Posterior cingulate gyrus (tissue), 11 donors: ENCODE measurements at regions of chr9 and their contacts with region 1.

Region 1: DNA sequence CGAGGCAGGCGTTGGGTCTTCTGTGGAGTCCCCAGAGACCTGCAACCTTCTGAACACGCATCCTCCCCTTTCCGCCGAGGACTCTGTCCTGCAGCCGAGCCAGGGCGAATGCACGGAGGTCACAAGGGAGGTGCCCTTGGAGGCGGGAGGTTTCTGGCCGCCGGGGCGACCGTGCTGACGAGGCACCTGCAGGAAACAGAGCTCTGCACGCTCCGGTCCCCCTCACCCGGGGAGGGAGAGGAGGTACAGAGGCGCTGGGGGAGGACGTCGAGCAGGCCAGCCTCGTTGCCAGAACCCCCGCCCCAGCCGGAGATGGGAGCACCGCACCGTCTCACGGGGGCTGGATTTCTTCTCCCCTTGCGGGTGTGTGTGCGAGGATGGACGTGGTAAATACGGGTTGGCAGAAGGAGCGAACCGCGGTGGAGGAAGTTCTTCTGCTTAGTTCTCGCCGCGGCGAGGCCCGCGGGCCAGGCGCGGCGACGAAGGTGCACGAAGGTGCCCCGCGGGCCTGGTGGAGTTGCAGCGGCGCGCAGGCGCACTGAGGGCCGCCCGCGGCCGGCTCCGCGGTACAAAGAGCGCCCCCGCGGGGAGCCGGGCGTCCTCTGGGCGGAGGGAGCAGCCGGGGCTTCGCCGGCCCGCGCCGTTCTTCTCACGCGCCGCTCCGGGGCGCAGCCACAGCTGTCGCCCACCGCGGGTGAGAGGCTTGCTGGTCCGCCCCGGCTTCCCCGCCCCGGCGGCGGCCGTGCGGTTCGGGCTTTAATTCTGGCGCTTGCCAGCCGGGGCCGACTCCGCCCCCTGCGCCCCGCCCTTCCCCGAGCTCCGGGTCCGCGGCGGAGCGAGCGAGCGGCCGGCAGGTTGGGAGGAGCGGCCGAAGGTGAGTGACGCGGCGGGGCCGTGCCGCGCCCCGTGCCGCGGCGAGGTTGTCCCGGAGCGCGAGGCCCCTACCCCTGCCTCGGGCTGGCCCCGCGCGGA is 289.5 kb downstream of the DOCK8 start:
- DNase-seq: peak; percentile 46 to 95 (median 62)

Region 2: GRCh38 chr9:406886-407654 is 97.1 kb before region 1 on chr9:
- intact Hi-C with region 1: loop called (anchors 10 kb)
- DNase-seq: no peak

Region 3: GRCh38 chr9:469672-470551 is 34.3 kb before region 1 on chr9:
- intact Hi-C with region 1: loop called (anchors 5 kb)
- DNase-seq: peak; percentile 47 to 96 (median 84)

Region 4: DNA sequence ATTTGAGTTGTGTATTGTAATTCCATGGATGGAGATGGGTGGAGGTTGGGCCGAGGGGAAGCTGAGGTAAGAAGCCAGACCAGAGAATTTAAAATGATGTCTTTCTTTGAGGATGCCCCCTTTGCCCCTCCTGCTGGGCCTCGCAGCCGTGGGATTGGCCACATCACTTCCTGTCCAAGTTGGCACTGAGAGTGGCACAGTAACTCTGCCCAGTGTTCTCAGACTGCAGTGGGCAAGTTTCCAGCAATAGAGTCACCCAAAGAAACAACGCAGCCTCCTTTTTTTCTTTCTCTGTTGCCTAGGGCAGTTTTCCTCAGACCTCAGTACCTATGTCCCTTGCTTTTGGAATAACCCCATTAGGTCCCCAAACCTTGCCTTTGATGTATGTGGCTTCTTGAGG is 30.7 kb after region 1 on chr9:
- intact Hi-C with region 1: loop called (anchors 2 kb)
- DNase-seq: peak; percentile 48 to 95 (median 73)

Region 5: GRCh38 chr9:546797-547223 is 42.6 kb after region 1 on chr9:
- intact Hi-C with region 1: loop called (anchors 5 kb)
- DNase-seq: peak in 2 of 10 donors; percentile 9 to 41

Region 6: GRCh38 chr9:663541-663940 is 159.4 kb after region 1 on chr9:
- intact Hi-C with region 1: no loop called
- DNase-seq: no peak